ENCODE measurements at regions of chr22 and their contacts with region 1.

Region 1: GRCh38 chr22:23767673-23768548 is at the start of gene CHCHD10:
- DNase-seq: peak; percentile 87
- ATAC-seq: peak; percentile 66
- H3K4me3 Mint-ChIP-seq: peak within 1 kb of the TSS; percentile 75
- H3K27ac Mint-ChIP-seq: peak within 1 kb of the TSS; percentile 72
- H3K4me1 Mint-ChIP-seq: peaks cover 36% of the 10 kb centered on the region
- H3K27me3 Mint-ChIP-seq: no peaks in the 10 kb centered on the region
- total RNA-seq, gene CHCHD10: 131 to 134 TPM

Region 2: DNA sequence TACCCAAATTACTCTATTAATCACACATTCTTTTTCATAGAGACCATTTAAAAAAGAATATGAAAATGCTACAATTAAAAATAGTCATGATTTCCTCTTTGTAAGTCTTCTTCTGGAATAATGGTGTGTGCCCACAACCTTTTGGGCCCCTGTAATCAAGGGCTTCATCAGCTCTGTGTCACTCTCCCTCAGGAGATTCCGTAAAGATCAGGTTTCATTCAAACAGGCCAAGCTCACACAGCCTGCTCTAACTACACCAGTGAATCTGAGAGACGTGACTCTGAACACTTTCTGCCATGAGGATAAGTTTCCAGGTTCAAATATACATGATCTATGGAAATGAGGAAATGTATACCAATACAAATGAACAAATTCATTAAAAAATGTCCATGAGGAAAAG is 145.3 kb before region 1 on chr22:
- CTCF ChIA-PET with region 1: no interaction called
- POLR2A ChIA-PET with region 1: no interaction called
- intact Hi-C with region 1: loop called (anchors 1 to 5 kb)
- DNase-seq: no peak
- ATAC-seq: no peak
- H3K4me3 Mint-ChIP-seq: no peak overlapping the region
- H3K27ac Mint-ChIP-seq: no peak overlapping the region
- H3K4me1 Mint-ChIP-seq: no peaks in the 10 kb centered on the region
- H3K27me3 Mint-ChIP-seq: no peaks in the 10 kb centered on the region

Region 3: DNA sequence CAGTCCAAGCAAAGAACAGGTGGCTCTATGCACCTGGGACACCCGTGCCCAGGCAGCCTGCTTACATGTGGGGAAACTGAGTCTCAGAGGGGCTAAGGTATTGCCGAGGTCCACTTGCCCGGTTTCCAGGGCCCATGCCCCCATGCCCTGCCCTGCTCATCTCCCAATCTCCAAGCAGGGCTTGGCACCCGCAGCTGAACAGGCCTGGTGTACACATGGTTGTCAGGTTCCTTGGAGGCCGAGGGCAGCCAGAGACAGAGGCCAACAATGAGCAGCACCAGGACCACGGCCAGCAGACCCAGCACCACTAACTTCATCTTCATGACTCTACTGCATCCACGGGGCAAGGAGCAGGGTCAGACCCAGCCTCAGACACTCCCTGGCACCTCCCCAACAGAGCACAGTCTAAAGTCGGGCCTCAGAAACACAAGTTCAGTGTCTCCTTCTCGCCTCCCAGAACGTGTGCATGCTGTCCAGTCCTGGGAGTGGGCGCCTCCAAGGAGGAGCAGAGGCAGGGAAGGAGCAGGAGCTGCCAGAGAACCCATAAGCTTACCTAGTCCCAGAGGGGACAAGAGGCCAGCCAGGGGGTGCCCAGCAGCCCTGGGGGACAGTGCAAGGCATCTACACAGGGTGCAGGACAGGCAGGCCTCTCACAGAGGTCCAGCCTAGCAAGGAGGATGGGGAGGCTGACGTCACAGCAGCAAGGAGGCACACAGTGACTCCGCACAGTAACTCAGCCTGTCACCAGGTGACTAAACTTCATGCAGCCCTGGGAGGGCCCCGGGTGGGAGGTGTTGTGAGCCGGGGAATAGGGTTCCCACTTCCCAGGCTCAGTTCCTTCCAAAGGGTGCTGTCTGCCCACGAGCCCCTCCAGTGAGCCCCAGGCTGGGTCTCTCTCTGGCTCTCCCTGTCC is 97.3 kb before region 1 on chr22:
- CTCF ChIA-PET with region 1: no interaction called
- POLR2A ChIA-PET with region 1: no interaction called
- intact Hi-C with region 1: no loop called
- DNase-seq: no peak
- ATAC-seq: no peak
- H3K4me3 Mint-ChIP-seq: no peak overlapping the region
- H3K27ac Mint-ChIP-seq: no peak overlapping the region
- H3K4me1 Mint-ChIP-seq: no peaks in the 10 kb centered on the region
- H3K27me3 Mint-ChIP-seq: no peaks in the 10 kb centered on the region

Region 4: DNA sequence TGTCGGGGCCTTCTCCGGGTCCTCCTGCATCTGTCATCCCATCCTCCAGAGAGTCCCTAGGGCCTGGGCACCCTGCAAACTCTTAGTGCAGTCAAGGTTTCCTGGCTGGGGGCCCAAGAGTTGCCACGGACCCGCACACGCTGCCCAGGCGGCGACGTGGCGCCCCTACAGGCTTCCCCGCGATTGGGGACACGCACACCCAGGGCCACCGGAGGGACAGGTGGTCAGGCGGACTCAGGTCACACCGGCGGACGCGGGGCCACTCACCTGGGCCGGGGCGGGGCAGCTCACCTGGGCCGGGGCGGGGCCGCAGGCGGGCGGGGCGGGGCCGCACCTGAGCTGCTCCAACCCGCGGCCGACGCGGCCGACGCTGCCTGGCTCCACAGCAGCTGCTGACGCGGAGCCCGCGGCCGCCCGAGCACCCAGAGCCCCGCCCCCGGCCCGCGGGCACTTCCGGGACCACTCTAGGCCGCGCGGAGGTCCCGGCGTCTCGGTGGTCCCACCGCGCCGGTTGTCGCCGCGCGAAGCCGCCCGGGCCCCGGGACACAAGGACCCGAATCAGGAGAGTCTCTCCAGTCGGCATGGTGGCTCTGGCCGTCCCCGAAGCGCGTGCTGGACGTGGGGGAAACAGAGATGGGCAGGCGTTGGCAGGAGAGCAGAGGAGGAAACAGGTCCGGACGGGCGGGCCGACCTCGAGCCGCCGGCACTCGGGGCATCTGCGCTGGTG is 17.0 kb before region 1 on chr22 and contains the start of gene ZNF70:
- CTCF ChIA-PET with region 1: no interaction called
- POLR2A ChIA-PET with region 1: no interaction called
- intact Hi-C with region 1: loop called (anchors 1 to 2 kb)
- DNase-seq: peak; percentile 91
- ATAC-seq: peak; percentile 99
- H3K4me3 Mint-ChIP-seq: peak within 1 kb of the TSS; percentile 77
- H3K27ac Mint-ChIP-seq: peak within 1 kb of the TSS; percentile 56
- H3K4me1 Mint-ChIP-seq: peaks cover 11% of the 10 kb centered on the region
- H3K27me3 Mint-ChIP-seq: peaks cover 2% of the 10 kb centered on the region
- total RNA-seq, gene ZNF70: 1.6 to 1.7 TPM

Region 5: DNA sequence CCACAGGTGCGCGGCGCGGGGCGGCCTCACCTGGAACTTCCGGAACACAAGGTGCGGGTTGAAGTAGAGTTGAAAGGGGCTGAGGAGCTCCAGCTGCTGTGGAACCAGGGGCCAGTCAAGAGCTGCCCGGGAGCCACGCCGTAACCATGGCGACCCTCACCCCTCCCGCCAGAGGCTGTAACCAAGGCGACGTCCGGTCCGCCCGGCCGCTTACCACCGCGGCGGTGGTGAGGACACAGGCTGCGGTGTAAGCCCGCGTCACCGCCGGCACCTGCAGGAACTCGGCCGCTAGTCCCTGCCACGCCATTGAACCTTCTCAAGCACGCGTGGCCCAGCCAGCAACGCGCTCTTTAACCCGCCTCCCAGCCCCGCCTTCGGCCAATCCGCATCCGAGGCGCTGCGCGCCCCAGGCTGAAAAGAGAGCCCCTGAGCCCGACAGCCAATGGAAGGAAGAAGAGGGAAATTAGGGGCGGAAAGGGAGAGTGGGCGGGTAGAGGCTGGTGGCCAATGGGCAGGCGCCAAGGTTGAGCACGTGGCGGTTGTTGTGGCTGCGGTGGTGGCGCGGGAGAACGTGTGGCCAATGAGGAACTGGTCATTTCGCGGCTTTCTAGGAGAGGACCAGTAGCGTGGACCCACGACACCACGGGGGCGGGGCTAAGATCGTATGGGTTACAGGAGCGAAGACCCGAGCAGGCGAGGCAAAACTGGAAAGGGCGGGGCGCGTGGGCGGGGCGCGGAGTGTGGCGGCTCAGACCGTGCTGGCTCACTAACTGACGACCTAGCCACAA is 71.0 kb after region 1 on chr22 and contains the start of gene DERL3:
- CTCF ChIA-PET with region 1: no interaction called
- POLR2A ChIA-PET with region 1: no interaction called
- intact Hi-C with region 1: loop called in 1 of 2 experiments (anchors 1 kb)
- DNase-seq: peak; percentile 97
- ATAC-seq: peak; percentile 94
- H3K4me3 Mint-ChIP-seq: peak within 1 kb of the TSS; percentile 83
- H3K27ac Mint-ChIP-seq: peak within 1 kb of the TSS; percentile 80
- H3K4me1 Mint-ChIP-seq: peaks cover 19% of the 10 kb centered on the region
- H3K27me3 Mint-ChIP-seq: peaks cover 2% of the 10 kb centered on the region
- total RNA-seq, gene DERL3: 5.2 to 5.7 TPM

Region 6: DNA sequence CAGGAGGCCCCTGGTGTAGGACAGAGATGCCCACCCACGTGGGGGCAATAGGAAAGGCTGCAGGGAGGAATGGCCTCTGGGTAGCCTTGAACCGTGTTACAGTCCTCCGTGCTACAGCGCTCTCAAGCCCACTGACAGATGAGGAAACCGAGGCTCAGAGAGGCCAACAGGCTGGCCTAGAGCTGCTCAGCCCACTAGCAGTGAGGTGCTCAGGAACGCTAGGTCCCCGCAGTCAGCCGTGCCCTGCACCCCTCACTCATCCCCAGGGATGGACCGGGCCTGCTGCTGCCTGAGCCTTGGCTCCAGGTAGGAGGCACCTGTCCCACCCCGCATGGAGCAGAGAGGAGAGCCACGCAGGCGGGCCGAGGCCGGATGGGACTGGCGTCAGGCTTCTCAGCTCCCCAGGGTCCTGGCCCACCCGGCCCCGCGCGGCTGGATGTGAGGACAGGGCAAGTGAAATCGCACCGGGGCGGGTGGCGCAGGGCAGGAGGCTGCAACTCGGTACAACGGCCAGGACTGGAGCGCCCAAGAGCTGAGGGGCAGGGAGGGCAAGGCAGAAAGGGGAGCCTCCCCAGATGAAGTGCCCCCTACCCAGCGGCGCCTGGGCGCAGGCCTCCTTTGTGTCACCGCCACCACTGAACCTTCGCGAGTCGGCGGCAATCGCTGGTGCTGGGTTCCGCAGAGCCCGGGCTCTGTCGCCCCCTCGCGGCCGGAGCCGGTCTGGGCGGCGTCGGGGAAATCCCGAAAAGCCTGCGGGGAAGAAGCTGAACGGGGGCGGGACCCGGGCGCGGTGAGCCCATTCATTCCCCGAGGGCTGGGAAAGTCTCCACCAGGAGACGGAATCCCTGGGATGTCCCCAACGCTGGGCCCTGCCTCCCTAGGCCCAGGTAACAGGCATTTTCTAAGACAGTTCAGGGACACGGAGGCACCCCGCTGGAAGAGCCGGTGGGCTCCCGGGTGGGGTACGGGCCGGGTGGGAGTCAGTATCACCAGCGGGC is 81.4 kb after region 1 on chr22:
- CTCF ChIA-PET with region 1: interaction called, 28 read pairs
- POLR2A ChIA-PET with region 1: no interaction called
- intact Hi-C with region 1: loop called in 1 of 2 experiments (anchors 5 kb)
- DNase-seq: peak; percentile 93
- ATAC-seq: peak; percentile 96
- H3K4me3 Mint-ChIP-seq: no peak overlapping the region
- H3K27ac Mint-ChIP-seq: no peak overlapping the region
- H3K4me1 Mint-ChIP-seq: no peaks in the 10 kb centered on the region
- H3K27me3 Mint-ChIP-seq: no peaks in the 10 kb centered on the region